Panc1 (cell line): ENCODE measurements at regions of chr1 and their contacts with region 1.

Region 1: GRCh38 chr1:207404849-207405525 is 49.1 kb upstream of the CR2 start:
- DNase-seq: peak; percentile 42
- ATAC-seq: peak; percentile 91
- H3K4me3 ChIP-seq: no peak overlapping the region
- H3K27ac ChIP-seq: no peak overlapping the region
- H3K4me1 ChIP-seq: no peaks in the 10 kb centered on the region
- H3K27me3 ChIP-seq: no peaks in the 10 kb centered on the region; the same call in 1 of the 2 replicates
- CTCF ChIP-seq: peak; percentile 76

Region 2: DNA sequence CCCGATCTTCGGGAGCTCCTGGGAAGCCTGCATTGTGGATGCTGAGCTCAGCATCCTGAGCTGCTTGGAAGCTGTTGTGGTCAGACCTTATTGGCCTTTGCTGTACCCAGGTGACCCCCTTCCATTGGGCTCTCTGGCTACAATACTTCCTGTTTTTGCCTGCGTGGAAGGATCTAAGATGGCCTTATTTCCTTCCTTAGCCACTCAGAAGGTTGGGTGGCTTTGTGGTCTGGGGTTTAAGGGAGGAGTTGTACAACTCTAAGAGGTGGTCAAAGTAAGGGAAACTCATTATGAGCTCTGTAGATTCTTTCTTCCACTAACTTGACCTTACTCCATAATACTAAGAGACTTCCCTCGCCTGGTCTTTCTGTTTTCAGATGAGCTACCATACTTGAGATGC is 334.2 kb before region 1 on chr1:
- CTCF ChIA-PET with region 1: interaction called, 16 read pairs
- POLR2A ChIA-PET with region 1: no interaction called
- in situ Hi-C with region 1: no loop called
- intact Hi-C with region 1: no loop called
- DNase-seq: no peak
- ATAC-seq: no peak
- H3K4me3 ChIP-seq: no peak overlapping the region
- H3K27ac ChIP-seq: no peak overlapping the region
- H3K4me1 ChIP-seq: no peaks in the 10 kb centered on the region
- H3K27me3 ChIP-seq: no peaks in the 10 kb centered on the region
- CTCF ChIP-seq: no peak

Region 3: GRCh38 chr1:207084701-207085180 is 320.2 kb before region 1 on chr1:
- CTCF ChIA-PET with region 1: interaction called, 15 read pairs
- POLR2A ChIA-PET with region 1: no interaction called
- in situ Hi-C with region 1: no loop called
- intact Hi-C with region 1: loop called (anchors 1 kb)
- DNase-seq: peak; percentile 47
- ATAC-seq: peak; percentile 91
- H3K4me3 ChIP-seq: no peak overlapping the region
- H3K27ac ChIP-seq: no peak overlapping the region
- H3K4me1 ChIP-seq: 0 out of 2 replicates have a peak, but pooled peaks cover 2% of the 10 kb centered on the region
- H3K27me3 ChIP-seq: no peaks in the 10 kb centered on the region
- CTCF ChIP-seq: peak; percentile 76